HEK293 (cell line): ENCODE measurements at regions of chr1 and their contacts with region 1.

Region 1: GRCh38 chr1:162035241-162035640 is 11.6 kb upstream of the OLFML2B start:
- H3K4me3 ChIP-seq: no peak overlapping the region
- H3K27ac ChIP-seq: no peak overlapping the region
- H3K4me1 ChIP-seq: no peaks in the 10 kb centered on the region
- CTCF ChIP-seq: no peak

Region 2: DNA sequence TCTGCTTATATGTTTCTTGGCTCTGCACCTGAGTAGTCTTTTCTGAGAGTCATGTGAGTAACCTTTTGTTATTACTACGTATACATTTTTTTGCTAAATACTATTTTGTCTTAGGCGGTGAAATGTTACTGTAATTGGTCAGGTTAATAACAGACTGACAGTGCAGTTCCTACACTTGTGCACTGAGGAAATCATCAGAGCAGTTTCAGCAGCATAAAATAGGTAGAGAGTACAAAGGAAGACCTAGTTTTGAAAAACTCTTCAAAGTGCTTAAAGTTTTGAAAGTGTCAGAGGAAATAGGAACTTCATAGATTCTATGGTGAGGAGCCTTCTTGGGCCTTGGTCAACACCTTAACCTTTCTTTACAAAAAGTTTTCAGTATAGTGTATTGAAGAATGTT is 258.0 kb before region 1 on chr1:
- CTCF ChIA-PET with region 1: interaction called, 15 read pairs
- POLR2A ChIA-PET with region 1: no interaction called
- H3K4me3 ChIP-seq: no peak overlapping the region
- H3K27ac ChIP-seq: no peak overlapping the region
- H3K4me1 ChIP-seq: no peaks in the 10 kb centered on the region
- CTCF ChIP-seq: no peak

Region 3: GRCh38 chr1:161792740-161793139 is 242.5 kb before region 1 on chr1:
- CTCF ChIA-PET with region 1: interaction called, 239 read pairs
- POLR2A ChIA-PET with region 1: interaction called, 17 read pairs
- H3K4me3 ChIP-seq: no peak overlapping the region
- H3K27ac ChIP-seq: no peak overlapping the region
- H3K4me1 ChIP-seq: no peaks in the 10 kb centered on the region
- CTCF ChIP-seq: peak; percentile 49; the same call in 1 of the 2 replicates

Region 4: DNA sequence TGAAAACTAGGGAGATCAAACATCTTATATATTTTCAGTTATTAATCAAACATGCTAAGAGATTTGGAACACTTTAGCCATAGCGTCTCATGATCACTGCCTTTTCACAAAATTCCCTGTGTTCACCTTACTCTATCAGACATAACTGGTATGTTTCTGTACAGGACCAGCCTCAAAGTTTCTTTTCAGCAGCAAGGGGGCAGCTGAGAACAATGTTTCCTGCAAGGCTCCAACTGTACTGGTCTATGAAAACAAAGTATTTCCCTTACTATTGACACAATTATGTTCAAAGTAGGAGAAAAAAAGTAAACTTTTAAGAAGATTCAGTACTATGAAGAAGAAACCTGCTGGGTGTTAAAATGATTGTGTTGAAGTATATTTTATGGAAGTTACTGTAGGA is 170.7 kb before region 1 on chr1:
- CTCF ChIA-PET with region 1: interaction called, 15 read pairs
- POLR2A ChIA-PET with region 1: no interaction called
- H3K4me3 ChIP-seq: no peak overlapping the region
- H3K27ac ChIP-seq: no peak overlapping the region
- H3K4me1 ChIP-seq: no peaks in the 10 kb centered on the region
- CTCF ChIP-seq: no peak

Region 5: DNA sequence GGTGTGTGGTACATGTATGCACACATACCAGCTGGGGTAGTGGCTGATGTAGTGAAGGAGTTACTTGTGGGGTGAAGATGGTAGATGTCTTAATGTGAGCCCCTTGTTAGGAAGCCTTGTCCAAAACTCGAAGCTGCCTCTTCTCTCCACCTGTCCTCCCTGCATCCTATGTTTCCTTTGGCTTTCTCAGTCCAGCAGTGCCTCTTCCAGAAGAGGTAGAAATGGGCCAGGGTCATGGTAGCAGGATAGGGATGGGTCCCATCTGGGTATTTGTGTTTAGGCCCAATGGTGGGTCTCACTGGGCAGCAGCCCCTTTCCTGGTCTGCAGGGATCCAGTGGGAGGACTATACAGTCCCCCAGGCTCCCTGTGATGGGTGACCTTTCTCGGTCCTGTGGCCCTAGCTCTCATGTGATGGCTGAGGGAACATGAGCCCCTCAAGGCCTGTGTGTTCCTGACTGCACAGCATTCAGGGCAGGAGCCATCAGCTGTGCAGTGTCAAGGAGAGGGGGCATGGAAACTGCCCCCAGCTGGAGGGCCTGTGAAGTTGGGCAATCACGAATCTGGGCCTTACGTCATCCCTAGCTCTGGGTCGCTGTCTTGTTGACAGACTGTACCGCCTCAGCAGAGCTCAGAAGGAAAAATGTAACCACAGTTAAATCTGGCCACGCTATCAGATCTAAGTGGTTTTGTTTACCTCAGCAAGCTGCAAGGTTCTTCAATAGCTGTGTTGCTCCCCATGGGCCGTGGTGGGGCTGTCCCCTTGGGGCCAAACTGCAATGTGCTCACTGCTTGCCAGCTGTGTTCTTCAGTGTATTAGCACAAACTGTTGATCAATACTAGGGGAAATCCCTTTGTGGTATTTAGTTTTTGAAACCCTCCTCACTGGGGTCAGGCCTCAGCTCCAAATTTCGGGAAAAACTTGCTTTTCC is 116.9 kb after region 1 on chr1:
- CTCF ChIA-PET with region 1: no interaction called
- POLR2A ChIA-PET with region 1: no interaction called
- H3K4me3 ChIP-seq: no peak overlapping the region
- H3K27ac ChIP-seq: no peak overlapping the region
- H3K4me1 ChIP-seq: peaks cover 13% of the 10 kb centered on the region
- CTCF ChIP-seq: 0 out of 2 replicates have a peak, but pooled peaks have one; percentile 52

Region 6: GRCh38 chr1:162256287-162256686 is 221.0 kb after region 1 on chr1:
- CTCF ChIA-PET with region 1: no interaction called
- POLR2A ChIA-PET with region 1: no interaction called
- H3K4me3 ChIP-seq: no peak overlapping the region
- H3K27ac ChIP-seq: no peak overlapping the region
- H3K4me1 ChIP-seq: peaks cover 6% of the 10 kb centered on the region; the same call in 1 of the 2 replicates
- CTCF ChIP-seq: no peak